Posterior cingulate gyrus (tissue), 11 donors: ENCODE measurements at regions of chr2 and their contacts with region 1.

Region 1: DNA sequence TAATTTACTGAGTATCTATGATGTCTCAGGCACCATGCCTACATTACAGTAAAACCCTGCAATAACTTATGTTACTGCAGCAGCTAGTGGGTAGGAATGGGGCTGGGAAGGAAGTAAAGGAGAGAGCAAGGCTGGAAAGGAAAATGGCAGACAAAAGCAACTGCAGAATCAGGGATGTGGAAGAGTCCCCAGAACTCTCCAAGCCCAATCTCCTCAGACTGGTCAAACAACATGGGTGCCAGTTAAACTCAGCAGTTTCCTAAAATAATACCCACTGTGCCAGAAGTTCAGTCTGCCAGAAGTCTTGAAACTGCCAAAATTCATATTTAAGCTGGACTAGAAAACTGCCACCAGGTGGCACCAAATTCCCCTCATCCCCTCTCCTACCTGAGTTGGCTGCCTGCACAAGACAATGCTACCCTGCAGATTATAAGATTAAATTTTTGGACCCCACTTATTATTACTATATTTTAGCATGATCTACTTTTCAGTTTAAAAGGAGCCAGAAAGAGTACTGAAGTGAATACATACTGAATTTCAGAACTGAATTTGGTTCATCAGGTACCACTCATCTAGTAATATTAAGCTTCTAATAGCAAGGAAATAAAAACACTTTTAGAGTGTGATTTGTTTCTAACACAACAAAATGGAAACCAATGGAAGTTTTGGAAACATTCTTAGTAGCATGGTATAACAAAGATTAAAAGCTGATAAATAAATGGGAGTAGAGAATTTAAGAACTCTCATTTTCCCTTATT is 86.8 kb upstream of the DNER start:
- DNase-seq: peak in 7 of 10 donors; percentile 40 to 87 (median 58)

Region 2: GRCh38 chr2:229562472-229563127 is 238.6 kb before region 1 on chr2:
- intact Hi-C with region 1: no loop called
- DNase-seq: no peak

Region 3: DNA sequence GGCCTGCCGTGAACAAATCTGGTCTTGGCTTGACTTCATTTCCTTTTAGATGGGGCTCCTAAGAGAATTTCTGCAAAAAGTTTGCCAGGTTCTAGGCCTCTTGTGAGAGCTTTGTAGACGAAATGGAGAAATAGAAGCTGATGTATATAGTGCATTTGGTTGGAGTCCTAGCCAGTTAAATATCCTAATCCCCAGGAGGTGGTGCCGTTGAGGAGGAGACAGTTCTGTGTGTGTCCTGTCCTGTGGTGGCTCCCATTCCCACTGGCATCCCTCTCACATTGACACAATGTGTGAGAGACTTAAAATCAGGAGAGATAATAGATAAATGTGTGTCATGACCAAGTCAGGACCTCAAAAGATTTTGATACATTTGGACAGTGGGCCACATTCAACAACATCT is 52.2 kb before region 1 on chr2:
- intact Hi-C with region 1: no loop called
- DNase-seq: no peak

Region 4: DNA sequence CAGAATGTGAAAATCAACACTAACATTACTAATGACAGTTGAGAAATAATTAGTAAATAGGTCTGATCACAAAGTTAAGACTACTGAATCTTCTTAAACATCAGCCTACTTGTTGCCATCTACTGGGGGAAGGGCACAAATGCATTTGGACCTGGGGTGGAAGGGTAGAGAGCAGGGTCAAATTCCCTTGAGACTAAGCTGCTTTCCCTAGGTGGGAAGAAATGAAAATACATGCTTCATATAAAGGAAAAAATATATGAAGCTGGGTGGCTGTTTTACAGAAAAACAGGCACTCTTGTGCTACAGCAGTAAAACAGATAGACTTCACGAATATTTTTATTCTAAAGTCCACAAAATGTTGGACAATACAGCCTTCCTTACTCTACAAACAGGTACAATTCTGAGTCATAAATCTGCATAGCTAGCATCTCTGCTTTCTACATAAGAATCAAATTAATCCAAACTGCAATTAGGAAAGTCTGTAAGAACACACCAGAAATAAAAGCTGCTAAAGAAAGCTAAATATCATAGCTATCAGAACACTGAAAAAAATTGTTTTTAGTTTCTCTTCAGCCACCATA is 109.7 kb after region 1 on chr2:
- intact Hi-C with region 1: loop called (anchors 5 kb)
- DNase-seq: no peak

Region 5: GRCh38 chr2:230370975-230371374 is 569.8 kb after region 1 on chr2:
- intact Hi-C with region 1: no loop called
- DNase-seq: no peak